ENCODE measurements at regions of chr11 and their contacts with region 1.

Region 1: DNA sequence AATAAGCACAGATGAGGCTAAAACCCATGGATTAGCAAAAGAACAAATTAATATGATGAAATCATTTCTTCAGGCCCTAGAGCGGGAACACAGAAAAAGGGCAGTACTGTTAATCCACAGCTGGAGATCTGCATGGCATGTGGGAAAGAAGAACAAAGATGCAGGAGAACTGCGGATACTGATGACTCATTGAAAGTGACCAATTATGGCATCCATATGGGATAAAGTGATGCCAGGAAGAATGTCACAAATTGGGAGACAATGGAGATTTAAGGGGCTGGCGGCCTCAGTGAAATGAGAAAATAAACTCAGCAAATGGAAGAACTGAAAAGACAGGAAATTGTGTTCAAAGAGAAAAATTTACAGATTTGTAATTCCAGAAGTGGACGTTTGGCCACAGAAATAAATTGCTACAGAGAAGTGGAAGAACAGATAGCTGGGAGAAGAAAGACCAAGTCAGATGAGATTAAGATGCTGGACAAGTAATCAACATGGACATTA is 39.4 kb downstream of the SIK3 start:
- DNase-seq: no peak
- H3K4me3 Mint-ChIP-seq: no peak overlapping the region
- H3K27ac Mint-ChIP-seq: no peak overlapping the region
- H3K4me1 Mint-ChIP-seq: peaks cover 51% of the 10 kb centered on the region
- H3K27me3 Mint-ChIP-seq: no peaks in the 10 kb centered on the region

Region 2: GRCh38 chr11:116637766-116638165 is 421.0 kb before region 1 on chr11:
- CTCF ChIA-PET with region 1: no interaction called
- intact Hi-C with region 1: no loop called
- DNase-seq: no peak
- H3K4me3 Mint-ChIP-seq: no peak overlapping the region
- H3K27ac Mint-ChIP-seq: no peak overlapping the region
- H3K4me1 Mint-ChIP-seq: no peaks in the 10 kb centered on the region
- H3K27me3 Mint-ChIP-seq: peaks cover 2% of the 10 kb centered on the region

Region 3: GRCh38 chr11:116879800-116880625 is 178.8 kb before region 1 on chr11:
- CTCF ChIA-PET with region 1: no interaction called
- intact Hi-C with region 1: loop called (anchors 1 kb)
- DNase-seq: peak; percentile 33
- H3K4me3 Mint-ChIP-seq: no peak overlapping the region
- H3K27ac Mint-ChIP-seq: no peak overlapping the region
- H3K4me1 Mint-ChIP-seq: peaks cover 23% of the 10 kb centered on the region
- H3K27me3 Mint-ChIP-seq: no peaks in the 10 kb centered on the region

Region 4: GRCh38 chr11:117039900-117040299 is 18.9 kb before region 1 on chr11:
- CTCF ChIA-PET with region 1: interaction called, 3 read pairs
- intact Hi-C with region 1: loop called (anchors 2 kb)
- DNase-seq: peak; percentile 40
- H3K4me3 Mint-ChIP-seq: no peak overlapping the region
- H3K27ac Mint-ChIP-seq: no peak overlapping the region
- H3K4me1 Mint-ChIP-seq: peaks cover 68% of the 10 kb centered on the region
- H3K27me3 Mint-ChIP-seq: no peaks in the 10 kb centered on the region

Region 5: GRCh38 chr11:117072517-117073461 is 14.0 kb after region 1 on chr11:
- CTCF ChIA-PET with region 1: interaction called, 3 read pairs
- intact Hi-C with region 1: loop called (anchors 1 kb)
- DNase-seq: no peak
- H3K4me3 Mint-ChIP-seq: no peak overlapping the region
- H3K27ac Mint-ChIP-seq: peak overlapping the region; percentile 30
- H3K4me1 Mint-ChIP-seq: peaks cover 63% of the 10 kb centered on the region
- H3K27me3 Mint-ChIP-seq: no peaks in the 10 kb centered on the region

Region 6: GRCh38 chr11:117092951-117093590 is 34.3 kb after region 1 on chr11:
- CTCF ChIA-PET with region 1: interaction called, 3 read pairs
- intact Hi-C with region 1: loop called (anchors 1 kb)
- DNase-seq: no peak
- H3K4me3 Mint-ChIP-seq: no peak overlapping the region
- H3K27ac Mint-ChIP-seq: peak overlapping the region; percentile 60
- H3K4me1 Mint-ChIP-seq: peaks cover 76% of the 10 kb centered on the region
- H3K27me3 Mint-ChIP-seq: no peaks in the 10 kb centered on the region

Measured in activated naive CD4-positive, alpha-beta T cell treated with anti-CD3 and anti-CD28 coated beads for 36 hours (primary cell).